HepG2 (cell line): ENCODE measurements at regions of chr12 and their contacts with region 1.

Region 1: DNA sequence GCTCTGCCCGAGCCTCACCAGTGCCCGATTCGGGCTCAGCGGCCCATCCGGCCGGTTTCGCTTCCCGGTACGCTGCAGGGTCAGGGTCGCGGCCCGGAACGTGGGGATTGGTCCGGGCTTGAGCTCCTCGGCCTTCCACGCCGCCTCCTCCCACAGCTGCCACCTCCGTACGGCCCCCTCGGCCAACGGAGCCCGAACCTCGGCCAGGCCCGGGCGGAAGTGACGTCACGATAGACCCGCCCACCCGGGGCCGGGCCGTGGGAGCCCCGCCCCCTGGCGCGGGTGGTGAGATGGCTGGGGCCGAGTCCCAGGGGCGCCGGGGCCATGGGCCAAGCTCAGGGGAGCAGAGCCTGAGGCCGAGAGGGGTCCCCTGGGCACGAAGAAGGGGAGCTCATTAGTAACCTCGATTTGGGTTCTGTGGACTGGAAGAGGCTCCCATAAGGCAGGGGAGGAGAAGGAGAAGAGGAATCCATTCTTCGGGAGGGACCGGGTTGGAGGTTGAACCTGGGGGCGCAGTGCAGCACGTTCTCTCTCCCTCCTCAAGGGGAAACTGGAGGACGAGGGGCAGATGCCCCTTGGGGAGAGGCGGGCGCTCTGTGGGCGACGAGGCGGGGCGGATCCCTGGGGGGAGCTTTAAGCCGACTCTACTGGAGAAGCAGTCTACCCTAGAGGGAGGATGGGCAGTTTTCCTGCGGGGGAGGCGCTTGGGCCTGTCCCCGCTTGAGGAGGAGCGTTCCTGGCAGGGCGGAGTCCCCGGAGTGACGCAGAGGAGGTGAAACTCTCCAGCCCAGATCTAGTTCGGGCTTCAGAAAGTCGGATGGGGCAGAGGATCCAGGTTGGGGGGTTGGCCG is at the start of gene MLF2:
- DNase-seq: peak; percentile 96
- ATAC-seq: peak; percentile 95
- H3K4me3 ChIP-seq: peak within 1 kb of the TSS; percentile 73 to 99 (median 97)
- H3K27ac ChIP-seq: peak within 1 kb of the TSS; percentile 96
- H3K4me1 ChIP-seq: peaks cover 28% of the 10 kb centered on the region
- H3K27me3 ChIP-seq: no peaks in the 10 kb centered on the region
- CTCF ChIP-seq: peak; percentile 33
- EP300 ChIP-seq: peak in 1 of 2 experiments; percentile 22; a peak in 1 of 4 replicates
- POLR2A ChIP-seq: peak; percentile 79 to 91
- RAD21 ChIP-seq: no peak; the same call in 1 of the 2 replicates
- total RNA-seq, gene MLF2: 88.1 and 95.8 TPM in 2 replicates

Region 2: DNA sequence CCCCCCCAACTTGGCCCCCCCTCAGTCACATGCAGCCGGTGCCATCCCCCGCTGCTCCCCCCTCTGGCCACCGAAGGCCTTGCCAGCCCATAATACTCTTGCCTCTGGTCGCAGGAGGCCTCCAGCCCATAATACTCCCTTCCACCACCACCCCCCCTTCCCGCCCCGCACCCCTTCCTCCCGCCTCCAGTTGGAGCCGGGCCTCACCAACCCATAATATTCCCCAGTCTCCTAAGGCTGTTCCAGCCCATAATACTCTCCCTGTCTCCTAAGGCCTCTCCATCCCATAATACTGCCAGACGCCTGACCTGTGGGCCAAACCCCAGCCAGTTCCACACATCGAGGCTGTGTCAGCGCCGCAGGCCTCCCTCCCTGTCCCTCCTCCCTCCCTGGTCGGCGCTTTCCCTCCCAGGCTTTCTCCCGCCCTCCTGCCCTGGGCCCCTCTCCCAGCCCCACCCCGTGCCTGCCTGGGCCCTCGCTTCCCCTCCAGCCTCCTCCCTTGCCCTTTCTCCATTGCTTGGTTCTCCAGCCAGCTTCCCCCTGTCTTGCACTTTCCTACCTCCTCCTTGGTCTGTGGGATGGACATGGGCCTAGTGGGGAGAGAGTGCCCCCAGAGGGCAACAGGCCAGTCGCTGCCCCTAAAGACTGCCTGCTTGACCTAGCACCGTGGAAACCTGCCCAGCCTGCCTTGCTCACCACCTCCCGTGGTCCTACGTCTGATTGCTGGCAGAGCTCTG is 139.2 kb before region 1 on chr12:
- CTCF ChIA-PET with region 1: no interaction called
- POLR2A ChIA-PET with region 1: interaction called, 13 read pairs
- in situ Hi-C with region 1: no loop called
- intact Hi-C with region 1: no loop called
- DNase-seq: peak; percentile 97
- ATAC-seq: peak; percentile 88
- H3K4me3 ChIP-seq: peak overlapping the region; percentile 11 to 70 (median 41); a peak in 5 of 6 replicates
- H3K27ac ChIP-seq: peak overlapping the region; percentile 74
- H3K4me1 ChIP-seq: peaks cover 41% of the 10 kb centered on the region
- H3K27me3 ChIP-seq: no peaks in the 10 kb centered on the region
- CTCF ChIP-seq: peak; percentile 75
- EP300 ChIP-seq: no peak
- POLR2A ChIP-seq: peak; percentile 41 to 75; a peak in 3 of 4 replicates
- RAD21 ChIP-seq: no peak

Region 3: DNA sequence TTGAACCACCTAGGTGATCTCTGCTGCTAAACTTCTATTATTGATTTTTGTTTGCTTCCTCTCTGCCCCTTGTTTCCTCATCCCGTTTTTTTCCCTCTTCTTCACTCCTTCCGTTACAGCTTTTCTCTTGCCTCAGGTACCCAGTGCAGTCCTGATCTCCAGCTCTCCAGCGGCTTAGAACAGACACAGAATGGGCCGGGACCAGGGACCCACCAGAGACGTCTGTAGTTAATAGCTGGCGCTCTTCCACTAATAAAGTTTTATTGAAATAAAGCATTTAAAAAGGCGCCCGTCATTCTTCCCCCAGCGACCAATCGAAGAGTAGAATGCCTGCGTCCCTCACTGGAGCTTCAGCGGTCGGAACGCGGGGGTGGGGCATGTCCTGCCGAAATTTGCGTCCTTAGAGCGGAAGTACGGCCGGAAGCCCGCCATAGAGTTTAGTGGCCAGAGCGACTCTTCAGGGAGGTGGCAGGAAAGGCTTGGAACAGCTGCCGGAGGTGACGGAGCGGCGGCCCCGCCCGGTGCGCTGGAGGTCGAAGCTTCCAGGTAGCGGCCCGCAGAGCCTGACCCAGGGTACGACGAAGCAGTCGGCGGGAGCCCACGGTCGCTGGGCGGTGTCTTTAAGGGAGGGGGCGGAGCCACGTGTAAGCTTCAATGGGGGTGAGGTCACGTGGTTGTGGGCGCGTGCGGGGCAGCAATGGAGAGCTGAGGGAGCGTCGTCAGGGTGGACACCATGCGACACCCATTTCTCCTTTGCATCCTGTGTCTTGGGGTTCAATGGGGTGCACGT is 29.3 kb before region 1 on chr12 and contains the start of gene COPS7A:
- CTCF ChIA-PET with region 1: no interaction called
- POLR2A ChIA-PET with region 1: interaction called, 54 read pairs
- in situ Hi-C with region 1: no loop called
- intact Hi-C with region 1: no loop called
- DNase-seq: peak; percentile 97
- ATAC-seq: peak; percentile 97
- H3K4me3 ChIP-seq: peak within 1 kb of the TSS; percentile 65 to 93 (median 74)
- H3K27ac ChIP-seq: peak within 1 kb of the TSS; percentile 82
- H3K4me1 ChIP-seq: peaks cover 31% of the 10 kb centered on the region
- H3K27me3 ChIP-seq: no peaks in the 10 kb centered on the region
- CTCF ChIP-seq: peak; percentile 66
- EP300 ChIP-seq: peak in 1 of 2 experiments; percentile 58; a peak in 1 of 4 replicates
- POLR2A ChIP-seq: peak; percentile 68 to 85
- RAD21 ChIP-seq: peak; percentile 36; the same call in 1 of the 2 replicates
- total RNA-seq, gene COPS7A: 38.0 and 40.0 TPM in 2 replicates

Region 4: DNA sequence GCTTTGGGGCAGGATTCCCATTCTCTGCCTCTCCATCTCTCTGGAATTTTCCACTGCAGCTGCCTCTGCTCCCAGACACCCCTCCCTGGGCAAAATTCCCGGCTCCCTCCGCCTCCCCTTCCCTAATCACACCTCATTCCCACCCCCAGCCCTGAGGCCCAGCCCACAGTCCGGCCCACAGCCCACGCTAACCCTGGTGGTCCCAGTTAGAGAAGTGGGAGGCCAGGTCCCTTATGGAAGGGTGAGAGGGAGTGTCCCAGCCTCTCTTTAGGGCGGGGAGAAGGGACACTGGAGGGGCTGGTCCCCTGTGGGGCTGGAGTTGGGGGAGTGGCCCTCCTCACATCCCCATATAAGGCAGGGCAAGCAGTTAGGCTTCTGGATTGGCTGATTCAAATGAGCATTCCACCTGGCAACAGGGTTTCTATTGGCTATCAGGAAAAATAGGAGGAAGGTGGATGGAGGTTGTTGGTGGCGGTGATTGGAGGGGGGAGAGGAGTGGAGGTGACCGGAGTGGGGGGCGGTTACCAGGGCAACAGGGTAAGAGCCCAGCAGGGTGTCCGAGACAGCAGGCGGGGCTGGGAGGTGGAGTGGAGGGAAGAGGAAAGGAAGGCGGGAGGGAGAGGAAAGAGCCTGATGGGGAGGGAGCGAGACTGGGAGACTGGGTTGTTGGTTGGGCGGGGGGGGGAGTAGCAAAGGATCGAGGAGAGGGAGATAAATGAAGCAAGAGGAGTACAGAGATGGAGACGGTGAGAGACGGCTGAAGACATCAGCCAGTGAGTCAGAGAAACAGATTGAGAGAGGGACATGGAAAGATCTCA is 11.1 kb after region 1 on chr12:
- CTCF ChIA-PET with region 1: interaction called, 13 read pairs
- POLR2A ChIA-PET with region 1: interaction called, 162 read pairs
- in situ Hi-C with region 1: no loop called
- intact Hi-C with region 1: loop called (anchors 1 kb)
- DNase-seq: peak; percentile 95
- ATAC-seq: peak; percentile 82
- H3K4me3 ChIP-seq: peak overlapping the region; percentile 41 to 72 (median 51)
- H3K27ac ChIP-seq: peak overlapping the region; percentile 54
- H3K4me1 ChIP-seq: peaks cover 77% of the 10 kb centered on the region
- H3K27me3 ChIP-seq: no peaks in the 10 kb centered on the region
- CTCF ChIP-seq: no peak
- EP300 ChIP-seq: peak in 1 of 2 experiments; percentile 82; a peak in 2 of 4 replicates
- POLR2A ChIP-seq: no peak
- RAD21 ChIP-seq: no peak

Region 5: GRCh38 chr12:6778574-6779550 is 25.7 kb after region 1 on chr12:
- CTCF ChIA-PET with region 1: interaction called, 54 read pairs
- POLR2A ChIA-PET with region 1: interaction called, 28 read pairs
- in situ Hi-C with region 1: loop called (anchors 5 kb)
- intact Hi-C with region 1: loop called (anchors 1 kb)
- DNase-seq: peak; percentile 85
- ATAC-seq: peak; percentile 89
- H3K4me3 ChIP-seq: peak overlapping the region; percentile 1 to 47 (median 35); a peak in 4 of 6 replicates
- H3K27ac ChIP-seq: peak overlapping the region; percentile 16
- H3K4me1 ChIP-seq: peaks cover 83% of the 10 kb centered on the region
- H3K27me3 ChIP-seq: peaks cover 2 to 16% of the 10 kb centered on the region in 2 experiments; a peak in 2 of 5 replicates
- CTCF ChIP-seq: peak; percentile 100
- EP300 ChIP-seq: peak in 1 of 2 experiments; percentile 41; a peak in 2 of 4 replicates
- POLR2A ChIP-seq: 0 out of 4 replicates have a peak, but pooled peaks of 1 of the 2 experiments have one; percentile 33
- RAD21 ChIP-seq: peak; percentile 99

Region 6: DNA sequence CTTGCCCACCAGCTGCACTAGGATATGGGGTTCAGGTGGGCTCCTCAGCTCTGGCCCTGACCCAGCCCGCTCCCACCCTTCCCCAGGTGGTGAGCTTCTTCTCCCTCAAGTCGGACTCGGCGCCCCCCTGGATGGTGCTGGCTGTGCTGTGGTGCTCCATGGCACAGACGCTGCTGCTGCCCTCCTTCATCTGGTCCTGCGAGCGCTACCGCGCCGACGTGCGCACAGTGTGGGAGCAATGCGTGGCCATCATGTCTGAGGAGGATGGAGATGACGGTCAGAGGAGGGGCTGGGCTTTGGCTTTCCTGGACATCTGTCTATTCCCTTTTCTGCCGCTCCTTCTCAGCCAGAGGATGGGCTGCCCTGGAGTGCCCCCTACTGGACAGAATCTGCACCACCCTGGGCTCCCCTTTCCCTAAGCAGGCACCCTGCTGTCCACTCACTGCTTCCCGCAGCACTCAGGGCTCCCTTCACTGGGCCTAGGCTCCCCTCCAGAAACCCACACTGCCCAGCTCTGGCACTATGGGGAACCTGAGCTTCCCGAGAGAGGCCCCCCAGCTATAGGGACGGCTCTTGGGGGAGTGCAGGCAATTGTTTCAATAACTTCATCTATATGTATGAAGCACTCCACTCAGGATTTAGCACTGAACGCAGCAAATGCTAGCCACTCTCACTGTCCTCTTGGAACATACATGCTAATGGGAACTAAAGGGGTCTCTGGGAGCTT is 72.4 kb after region 1 on chr12:
- CTCF ChIA-PET with region 1: interaction called, 34 read pairs
- POLR2A ChIA-PET with region 1: interaction called, 20 read pairs
- in situ Hi-C with region 1: loop called (anchors 5 kb)
- intact Hi-C with region 1: loop called (anchors 1 kb)
- DNase-seq: peak; percentile 67
- ATAC-seq: peak; percentile 65
- H3K4me3 ChIP-seq: no peak overlapping the region
- H3K27ac ChIP-seq: no peak overlapping the region
- H3K4me1 ChIP-seq: peaks cover 34% of the 10 kb centered on the region
- H3K27me3 ChIP-seq: peaks cover 2 to 6% of the 10 kb centered on the region in 2 experiments; a peak in 3 of 5 replicates
- CTCF ChIP-seq: peak; percentile 95
- EP300 ChIP-seq: no peak
- POLR2A ChIP-seq: no peak
- RAD21 ChIP-seq: peak; percentile 85

Region 7: GRCh38 chr12:6890789-6891645 is 137.9 kb after region 1 on chr12:
- CTCF ChIA-PET with region 1: no interaction called
- POLR2A ChIA-PET with region 1: no interaction called
- in situ Hi-C with region 1: no loop called
- intact Hi-C with region 1: no loop called
- DNase-seq: peak; percentile 88
- ATAC-seq: peak; percentile 96
- H3K4me3 ChIP-seq: peak overlapping the region; percentile 50 to 79 (median 65)
- H3K27ac ChIP-seq: peak overlapping the region; percentile 94
- H3K4me1 ChIP-seq: peaks cover 52% of the 10 kb centered on the region
- H3K27me3 ChIP-seq: no peaks in the 10 kb centered on the region; a peak in 1 of 5 replicates
- CTCF ChIP-seq: peak; percentile 87
- EP300 ChIP-seq: peak in 1 of 2 experiments; percentile 56; a peak in 3 of 4 replicates
- POLR2A ChIP-seq: peak; percentile 73 to 78
- RAD21 ChIP-seq: peak; percentile 99